ENCODE measurements at regions of chr11 and their contacts with region 1.

Region 1: DNA sequence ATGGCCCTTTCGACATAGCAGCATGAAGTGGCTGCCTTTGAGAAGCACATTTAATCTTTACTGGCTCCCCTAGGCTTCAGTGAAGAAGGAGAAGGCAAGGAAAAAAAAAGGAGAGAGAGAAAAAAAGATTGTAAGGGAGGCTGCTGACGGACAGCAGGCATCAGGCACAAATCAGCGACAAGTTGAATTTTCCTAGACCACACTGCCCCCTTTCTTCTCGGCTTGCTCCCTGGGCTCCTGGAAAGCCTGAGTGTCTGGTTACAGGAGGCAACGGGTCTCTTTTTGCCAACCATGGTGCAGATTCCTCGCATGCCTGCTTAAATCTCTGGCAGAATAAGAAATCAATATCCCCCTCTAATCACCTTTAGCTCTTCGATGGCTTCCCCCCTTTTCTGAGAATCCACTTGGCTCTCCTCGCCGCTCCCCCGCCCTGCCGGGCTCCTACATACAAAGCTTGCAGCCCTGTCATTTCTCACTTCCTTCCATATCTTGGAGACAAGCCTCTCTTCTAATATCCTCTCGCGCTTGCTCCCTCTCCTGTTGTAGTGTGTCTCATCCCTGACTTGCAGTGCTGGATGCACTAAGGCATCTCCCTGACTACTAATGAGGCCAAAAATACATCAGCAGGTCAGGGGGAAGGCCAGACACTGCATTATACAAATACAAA is 14.3 kb downstream of the BLID start:
- DNase-seq: peak; percentile 64 to 96 (median 78)

Region 2: DNA sequence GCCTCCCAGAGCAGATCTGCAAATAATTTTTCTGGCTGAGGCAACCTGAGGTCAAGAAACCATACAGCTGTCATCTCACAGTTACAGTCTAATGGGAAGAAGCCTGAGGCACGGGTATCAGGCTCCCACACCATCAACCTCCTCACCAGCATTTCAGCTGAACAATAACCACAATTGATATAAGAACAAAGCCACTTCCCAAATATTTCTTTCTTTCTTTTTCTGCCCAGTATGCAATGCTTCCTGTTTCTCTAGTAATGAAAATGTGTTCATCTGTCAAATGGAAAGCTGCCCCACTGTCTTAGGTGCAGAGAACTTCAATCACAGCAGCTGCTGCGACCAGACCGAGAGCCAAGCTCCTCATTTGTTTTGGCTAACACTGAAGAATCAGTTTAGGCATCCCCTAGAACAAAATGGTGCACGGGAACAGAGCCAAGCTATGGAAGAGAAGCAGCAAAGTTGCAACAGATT is 94.1 kb before region 1 on chr11:
- intact Hi-C with region 1: no loop called
- DNase-seq: peak in 8 of 10 donors; percentile 10 to 79 (median 23)

Region 3: DNA sequence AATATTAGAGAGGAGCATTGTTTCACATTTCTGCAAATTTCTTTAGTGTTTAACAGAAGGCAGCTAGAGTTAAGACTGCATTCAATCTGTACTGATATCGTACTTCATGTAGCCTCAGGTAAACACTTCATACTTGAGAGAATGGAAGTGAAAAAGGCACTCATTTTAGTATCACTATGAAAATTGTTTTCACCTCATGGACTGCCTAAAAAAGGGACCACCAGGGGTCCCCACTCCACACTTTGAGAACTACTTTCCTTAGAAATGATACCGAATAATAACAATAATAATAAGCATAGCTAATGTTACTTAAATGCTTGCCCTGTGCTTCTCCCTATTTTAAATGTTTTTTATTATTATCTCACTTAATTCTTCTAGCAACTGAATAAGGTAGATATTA is 80.9 kb before region 1 on chr11:
- intact Hi-C with region 1: loop called (anchors 2 kb)
- DNase-seq: peak in 1 of 10 donors; percentile 18

Region 4: GRCh38 chr11:122189229-122189628 is 87.5 kb after region 1 on chr11:
- intact Hi-C with region 1: no loop called
- DNase-seq: no peak

Region 5: GRCh38 chr11:122202951-122203456 is 101.2 kb after region 1 on chr11:
- intact Hi-C with region 1: loop called (anchors 2 kb)
- DNase-seq: peak; percentile 64 to 97 (median 79)